GM12878 (cell line): ENCODE measurements at regions of chr9 and their contacts with region 1.

Region 1: GRCh38 chr9:33623658-33624586 is 99.9 kb downstream of the ANKRD18B start:
- DNase-seq: peak; percentile 34
- ATAC-seq: peak; percentile 99
- H3K4me3 ChIP-seq: no peak overlapping the region
- H3K27ac ChIP-seq: no peak overlapping the region
- H3K4me1 ChIP-seq: no peaks in the 10 kb centered on the region
- H3K27me3 ChIP-seq: peaks cover 0 to under 1% of the 10 kb centered on the region in 2 experiments; a peak in 1 of 4 replicates
- CTCF ChIP-seq: peak; percentile 83 to 88 (median 83)
- EP300 ChIP-seq: no peak
- POLR2A ChIP-seq: no peak
- RAD21 ChIP-seq: peak; percentile 89

Region 2: DNA sequence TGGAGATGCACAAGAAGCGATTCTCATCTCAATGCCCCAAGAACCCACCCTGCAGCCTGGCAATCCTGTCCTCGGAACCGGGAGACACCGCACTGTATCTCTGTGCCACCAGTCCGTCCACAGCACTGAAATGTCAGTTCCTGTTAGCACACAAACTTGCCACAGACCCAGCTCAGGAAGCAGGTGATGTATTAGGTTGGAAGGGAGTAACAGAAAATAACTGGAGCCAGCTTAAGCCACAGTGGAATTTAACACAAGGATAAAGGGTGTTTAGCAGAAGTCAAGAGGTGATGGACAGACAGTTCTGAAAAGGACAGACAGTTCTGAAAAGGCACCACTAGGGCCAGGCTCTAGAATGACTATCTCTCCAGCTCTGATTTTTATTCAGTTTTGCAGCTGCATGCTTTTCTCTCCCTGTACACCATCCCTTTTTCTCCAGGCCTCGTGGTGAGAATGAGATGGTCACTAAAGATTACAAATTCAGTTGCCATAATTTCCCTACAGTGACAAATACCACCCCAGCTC is 14.5 kb after region 1 on chr9:
- CTCF ChIA-PET with region 1: interaction called, 15 read pairs
- POLR2A ChIA-PET with region 1: no interaction called
- RAD21 ChIA-PET with region 1: interaction called, 3 read pairs
- SMC1A ChIA-PET with region 1: interaction called, 4 read pairs
- in situ Hi-C with region 1: no loop called
- intact Hi-C with region 1: no loop called
- DNase-seq: no peak
- ATAC-seq: no peak
- H3K4me3 ChIP-seq: no peak overlapping the region
- H3K27ac ChIP-seq: no peak overlapping the region
- H3K4me1 ChIP-seq: no peaks in the 10 kb centered on the region
- H3K27me3 ChIP-seq: no peaks in the 10 kb centered on the region; a peak in 1 of 4 replicates
- CTCF ChIP-seq: no peak
- EP300 ChIP-seq: no peak
- POLR2A ChIP-seq: no peak
- RAD21 ChIP-seq: no peak

Region 3: GRCh38 chr9:33721674-33722358 is 97.9 kb after region 1 on chr9:
- CTCF ChIA-PET with region 1: interaction called, 150 read pairs
- POLR2A ChIA-PET with region 1: no interaction called
- RAD21 ChIA-PET with region 1: interaction called, 64 read pairs
- SMC1A ChIA-PET with region 1: interaction called, 27 read pairs
- in situ Hi-C with region 1: loop called (anchors 5 kb)
- intact Hi-C with region 1: loop called (anchors 1 kb)
- DNase-seq: peak; percentile 17
- ATAC-seq: peak; percentile 86
- H3K4me3 ChIP-seq: no peak overlapping the region
- H3K27ac ChIP-seq: no peak overlapping the region
- H3K4me1 ChIP-seq: no peaks in the 10 kb centered on the region
- H3K27me3 ChIP-seq: no peaks in the 10 kb centered on the region
- CTCF ChIP-seq: peak; percentile 99 to 100 (median 100)
- EP300 ChIP-seq: no peak
- POLR2A ChIP-seq: no peak
- RAD21 ChIP-seq: peak; percentile 89